ENCODE measurements at regions of chr21 and their contacts with region 1.

Region 1: GRCh38 chr21:30831194-30831765 is 1.7 kb upstream of the KRTAP7-1 start:
- DNase-seq: peak; percentile 17
- CTCF ChIP-seq: peak; percentile 46

Region 2: GRCh38 chr21:30818837-30819610 is 12.3 kb before region 1 on chr21:
- CTCF ChIA-PET with region 1: no interaction called
- POLR2A ChIA-PET with region 1: no interaction called
- DNase-seq: no peak
- CTCF ChIP-seq: no peak

Region 3: GRCh38 chr21:31088315-31088714 is 257.0 kb after region 1 on chr21:
- CTCF ChIA-PET with region 1: interaction called, 14 read pairs
- POLR2A ChIA-PET with region 1: no interaction called
- DNase-seq: no peak
- CTCF ChIP-seq: no peak

Measured in GM10248 (cell line).